WTC11 (cell line): ENCODE measurements at regions of chr1 and their contacts with region 1.

Region 1: GRCh38 chr1:75615613-75616435 is 4.9 kb upstream of the SLC44A5 start:
- DNase-seq: peak; percentile 47
- ATAC-seq: peak; percentile 45
- H3K4me3 Mint-ChIP-seq: peak overlapping the region; percentile 77
- H3K27ac Mint-ChIP-seq: no peak overlapping the region
- H3K4me1 Mint-ChIP-seq: peaks cover 18% of the 10 kb centered on the region
- H3K27me3 Mint-ChIP-seq: peaks cover 69% of the 10 kb centered on the region
- CTCF ChIP-seq: no peak

Region 2: DNA sequence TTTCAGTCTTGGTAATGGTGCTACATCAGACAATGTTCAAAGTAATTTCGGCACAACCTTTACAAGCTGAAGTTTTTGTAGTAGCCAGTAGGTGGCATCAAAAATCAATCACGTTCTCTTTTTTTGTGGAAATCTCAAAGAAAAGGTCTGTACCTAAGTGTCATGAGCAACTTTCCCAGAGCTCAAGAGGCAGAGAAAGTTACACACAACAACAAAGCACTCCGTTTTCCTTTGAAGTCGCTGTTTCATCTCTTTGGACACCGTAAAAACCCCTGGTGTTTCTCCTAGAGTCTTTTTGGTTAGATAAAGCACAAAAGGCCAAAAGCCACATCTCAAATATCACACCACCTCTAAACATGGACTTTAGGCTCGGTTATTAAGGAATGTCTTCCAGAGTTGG is 350.0 kb before region 1 on chr1:
- CTCF ChIA-PET with region 1: interaction called, 17 read pairs
- POLR2A ChIA-PET with region 1: no interaction called
- DNase-seq: no peak
- ATAC-seq: peak; percentile 84
- H3K4me3 Mint-ChIP-seq: no peak overlapping the region
- H3K27ac Mint-ChIP-seq: no peak overlapping the region
- H3K4me1 Mint-ChIP-seq: no peaks in the 10 kb centered on the region
- H3K27me3 Mint-ChIP-seq: no peaks in the 10 kb centered on the region
- CTCF ChIP-seq: no peak

Region 3: DNA sequence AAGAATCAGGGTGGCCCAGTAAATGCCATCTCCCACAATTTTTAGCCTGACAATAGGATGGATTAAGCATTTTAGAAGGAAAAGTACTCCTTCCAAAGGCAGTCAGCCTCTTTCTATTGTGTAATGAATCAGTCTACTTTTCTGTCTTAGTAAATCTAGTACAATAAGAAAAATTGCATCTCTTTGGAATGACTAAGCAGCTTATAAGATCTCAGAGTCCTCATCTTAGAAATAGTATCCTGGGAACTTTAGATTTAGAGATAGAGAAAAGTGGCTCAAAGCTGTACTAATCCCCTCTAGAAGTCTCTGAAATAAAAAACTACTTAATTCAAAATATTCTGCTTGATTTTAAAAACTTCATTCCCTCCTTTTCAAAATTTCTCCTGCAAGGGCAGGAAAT is 86.3 kb before region 1 on chr1:
- CTCF ChIA-PET with region 1: no interaction called
- POLR2A ChIA-PET with region 1: no interaction called
- DNase-seq: no peak
- ATAC-seq: no peak
- H3K4me3 Mint-ChIP-seq: no peak overlapping the region
- H3K27ac Mint-ChIP-seq: no peak overlapping the region
- H3K4me1 Mint-ChIP-seq: peaks cover 11% of the 10 kb centered on the region
- H3K27me3 Mint-ChIP-seq: no peaks in the 10 kb centered on the region
- CTCF ChIP-seq: no peak

Region 4: GRCh38 chr1:75582725-75583261 is 33.0 kb before region 1 on chr1:
- CTCF ChIA-PET with region 1: no interaction called
- POLR2A ChIA-PET with region 1: no interaction called
- DNase-seq: no peak
- ATAC-seq: no peak
- H3K4me3 Mint-ChIP-seq: no peak overlapping the region
- H3K27ac Mint-ChIP-seq: no peak overlapping the region
- H3K4me1 Mint-ChIP-seq: peaks cover 11% of the 10 kb centered on the region
- H3K27me3 Mint-ChIP-seq: no peaks in the 10 kb centered on the region; the same call in 1 of the 2 replicates
- CTCF ChIP-seq: no peak

Region 5: GRCh38 chr1:75600781-75601180 is 15.0 kb before region 1 on chr1:
- CTCF ChIA-PET with region 1: interaction called, 10 read pairs
- POLR2A ChIA-PET with region 1: no interaction called
- DNase-seq: no peak
- ATAC-seq: no peak
- H3K4me3 Mint-ChIP-seq: no peak overlapping the region
- H3K27ac Mint-ChIP-seq: no peak overlapping the region
- H3K4me1 Mint-ChIP-seq: peaks cover 8% of the 10 kb centered on the region
- H3K27me3 Mint-ChIP-seq: no peaks in the 10 kb centered on the region
- CTCF ChIP-seq: no peak

Region 6: DNA sequence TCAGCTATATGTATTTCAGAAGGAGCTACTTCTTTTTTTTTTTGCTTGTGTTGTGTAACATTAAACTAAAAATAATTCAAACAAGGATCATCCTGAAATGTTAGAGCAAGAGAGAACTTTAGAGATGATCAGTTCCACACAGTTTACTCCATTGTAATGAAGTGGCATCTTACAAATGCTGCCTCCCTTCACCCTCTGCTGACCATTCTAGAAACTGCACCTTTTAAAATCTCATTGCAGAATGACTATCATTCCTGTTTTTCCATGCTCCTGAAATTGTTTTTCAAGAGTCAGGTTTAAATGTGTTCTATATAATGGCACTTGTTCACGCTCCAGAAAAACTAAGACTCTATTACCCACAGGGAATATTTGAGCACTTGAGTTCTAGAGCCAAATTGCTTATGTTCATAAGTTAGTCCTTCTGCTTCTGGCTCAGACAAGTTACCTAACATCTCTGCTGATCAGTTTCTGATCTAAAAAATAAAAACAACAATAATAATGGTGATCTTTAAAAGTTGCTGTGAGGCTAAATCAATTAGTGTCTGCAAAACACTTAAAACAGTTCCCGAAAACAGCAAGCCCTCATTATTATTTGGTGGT is 16.6 kb after region 1 on chr1:
- CTCF ChIA-PET with region 1: interaction called, 23 read pairs
- POLR2A ChIA-PET with region 1: interaction called, 4 read pairs
- DNase-seq: no peak
- ATAC-seq: peak; percentile 76
- H3K4me3 Mint-ChIP-seq: no peak overlapping the region
- H3K27ac Mint-ChIP-seq: no peak overlapping the region
- H3K4me1 Mint-ChIP-seq: peaks cover 24% of the 10 kb centered on the region
- H3K27me3 Mint-ChIP-seq: no peaks in the 10 kb centered on the region
- CTCF ChIP-seq: peak; percentile 28; the same call in 1 of the 2 replicates

Region 7: GRCh38 chr1:75672528-75673393 is 56.9 kb after region 1 on chr1:
- CTCF ChIA-PET with region 1: interaction called, 10 read pairs
- POLR2A ChIA-PET with region 1: no interaction called
- DNase-seq: peak; percentile 23
- ATAC-seq: peak; percentile 92
- H3K4me3 Mint-ChIP-seq: peak overlapping the region; percentile 23
- H3K27ac Mint-ChIP-seq: peak overlapping the region; percentile 91
- H3K4me1 Mint-ChIP-seq: peaks cover 53% of the 10 kb centered on the region
- H3K27me3 Mint-ChIP-seq: no peaks in the 10 kb centered on the region
- CTCF ChIP-seq: no peak